ENCODE measurements at regions of chr19 and their contacts with region 1.

Region 1: DNA sequence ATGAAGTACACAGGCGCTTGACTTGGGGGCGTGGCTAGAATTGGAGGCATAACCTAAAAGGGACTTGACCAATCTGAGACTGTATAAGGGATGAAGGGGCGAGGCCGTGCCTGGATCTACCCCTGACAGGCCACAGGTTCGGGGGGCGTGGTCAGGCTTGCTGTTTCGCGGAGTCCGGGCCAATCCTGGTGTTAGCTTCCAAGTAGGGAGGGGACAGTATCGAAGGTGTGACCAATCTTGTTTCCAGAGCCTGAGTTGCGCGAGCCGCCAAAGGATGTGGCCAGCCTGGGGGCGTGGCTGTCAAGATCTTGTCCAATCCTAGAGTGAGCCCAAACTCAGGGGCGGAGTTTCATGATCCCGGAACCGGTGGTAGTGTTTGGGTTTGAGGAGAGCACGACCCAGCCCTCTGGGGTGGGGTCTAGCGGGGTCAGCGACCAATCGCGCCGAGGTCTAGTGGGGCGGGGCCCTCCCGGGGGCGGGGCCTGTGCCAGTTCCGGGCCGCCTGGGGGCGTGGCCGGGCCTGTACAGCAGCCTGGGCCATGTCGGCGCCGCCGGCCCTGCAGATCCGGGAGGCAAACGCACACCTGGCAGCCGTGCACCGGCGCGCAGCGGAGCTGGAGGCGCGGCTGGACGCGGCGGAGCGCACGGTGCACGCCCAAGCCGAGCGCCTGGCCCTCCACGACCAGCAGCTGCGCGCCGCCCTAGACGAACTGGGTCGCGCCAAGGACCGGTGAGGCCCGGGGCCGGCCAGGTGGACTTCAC is at the start of gene VMAC:
- DNase-seq: peak; percentile 98
- H3K4me3 Mint-ChIP-seq: peak within 1 kb of the TSS; percentile 90
- H3K27ac Mint-ChIP-seq: peak within 1 kb of the TSS; percentile 92
- H3K4me1 Mint-ChIP-seq: peaks cover 8% of the 10 kb centered on the region
- H3K27me3 Mint-ChIP-seq: no peaks in the 10 kb centered on the region
- CTCF ChIP-seq: no peak
- total RNA-seq, gene VMAC: 4.3 and 5.5 TPM in 2 replicates

Region 2: GRCh38 chr19:5767949-5768348 is 136.6 kb before region 1 on chr19:
- CTCF ChIA-PET with region 1: interaction called, 10 read pairs
- intact Hi-C with region 1: no loop called
- DNase-seq: no peak
- H3K4me3 Mint-ChIP-seq: no peak overlapping the region
- H3K27ac Mint-ChIP-seq: no peak overlapping the region
- H3K4me1 Mint-ChIP-seq: no peaks in the 10 kb centered on the region
- H3K27me3 Mint-ChIP-seq: no peaks in the 10 kb centered on the region
- CTCF ChIP-seq: no peak

Region 3: GRCh38 chr19:5864725-5865486 is 39.6 kb before region 1 on chr19:
- CTCF ChIA-PET with region 1: no interaction called
- intact Hi-C with region 1: no loop called
- DNase-seq: no peak
- H3K4me3 Mint-ChIP-seq: no peak overlapping the region
- H3K27ac Mint-ChIP-seq: no peak overlapping the region
- H3K4me1 Mint-ChIP-seq: no peaks in the 10 kb centered on the region
- H3K27me3 Mint-ChIP-seq: peaks cover 7% of the 10 kb centered on the region
- CTCF ChIP-seq: no peak

Region 4: DNA sequence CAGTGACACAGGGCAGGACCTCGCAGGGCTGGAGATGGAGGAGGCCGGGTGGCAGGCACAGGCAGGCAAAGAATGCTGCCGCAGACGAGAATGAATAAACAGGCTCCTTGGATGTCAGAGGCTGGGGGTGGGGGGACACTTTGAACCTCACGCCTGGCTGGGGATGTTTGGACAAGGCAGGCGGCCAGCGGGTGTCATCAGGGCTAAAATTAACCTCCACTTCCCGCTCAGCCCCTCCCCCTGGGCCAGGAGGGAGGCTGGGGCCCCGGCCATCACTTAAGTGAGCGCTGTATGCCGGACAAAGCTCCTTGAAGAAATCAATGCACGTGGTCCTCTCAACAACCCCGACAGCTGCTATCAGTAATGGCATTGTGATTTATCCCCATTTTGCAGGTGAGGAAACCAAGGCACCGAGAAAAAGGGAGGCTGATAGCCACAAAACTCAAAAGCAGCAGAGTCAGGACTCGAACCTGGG is 23.9 kb before region 1 on chr19:
- CTCF ChIA-PET with region 1: no interaction called
- intact Hi-C with region 1: no loop called
- DNase-seq: no peak
- H3K4me3 Mint-ChIP-seq: no peak overlapping the region
- H3K27ac Mint-ChIP-seq: no peak overlapping the region
- H3K4me1 Mint-ChIP-seq: no peaks in the 10 kb centered on the region
- H3K27me3 Mint-ChIP-seq: peaks cover 23% of the 10 kb centered on the region
- CTCF ChIP-seq: no peak

Region 5: DNA sequence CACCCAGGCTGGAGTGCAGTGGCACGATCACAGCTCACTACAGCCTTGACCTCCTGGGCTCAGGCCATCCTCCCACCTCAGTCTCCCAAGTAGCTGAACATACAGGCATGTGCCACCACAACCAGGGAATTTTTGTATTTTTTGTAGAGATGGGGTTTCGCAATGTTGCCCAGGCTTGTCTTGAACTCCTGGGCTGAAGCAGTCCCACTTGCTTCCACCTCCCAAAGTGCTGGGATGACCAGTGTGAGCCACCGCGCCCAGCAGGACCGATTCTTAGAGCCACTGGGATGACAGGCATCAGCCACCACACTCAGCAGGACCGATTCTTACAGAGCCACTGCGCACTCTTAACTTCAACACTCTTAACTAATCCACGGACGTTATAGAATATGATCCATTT is 128.3 kb after region 1 on chr19:
- CTCF ChIA-PET with region 1: interaction called, 12 read pairs
- intact Hi-C with region 1: no loop called
- DNase-seq: no peak
- H3K4me3 Mint-ChIP-seq: no peak overlapping the region
- H3K27ac Mint-ChIP-seq: no peak overlapping the region
- H3K4me1 Mint-ChIP-seq: peaks cover 6% of the 10 kb centered on the region
- H3K27me3 Mint-ChIP-seq: no peaks in the 10 kb centered on the region
- CTCF ChIP-seq: no peak

Measured in Calu3 (cell line).